Activated CD4-positive, alpha-beta memory T cell treated with anti-CD3 and anti-CD28 coated beads for 36 hours (primary cell): ENCODE measurements at regions of chr3 and their contacts with region 1.

Region 1: DNA sequence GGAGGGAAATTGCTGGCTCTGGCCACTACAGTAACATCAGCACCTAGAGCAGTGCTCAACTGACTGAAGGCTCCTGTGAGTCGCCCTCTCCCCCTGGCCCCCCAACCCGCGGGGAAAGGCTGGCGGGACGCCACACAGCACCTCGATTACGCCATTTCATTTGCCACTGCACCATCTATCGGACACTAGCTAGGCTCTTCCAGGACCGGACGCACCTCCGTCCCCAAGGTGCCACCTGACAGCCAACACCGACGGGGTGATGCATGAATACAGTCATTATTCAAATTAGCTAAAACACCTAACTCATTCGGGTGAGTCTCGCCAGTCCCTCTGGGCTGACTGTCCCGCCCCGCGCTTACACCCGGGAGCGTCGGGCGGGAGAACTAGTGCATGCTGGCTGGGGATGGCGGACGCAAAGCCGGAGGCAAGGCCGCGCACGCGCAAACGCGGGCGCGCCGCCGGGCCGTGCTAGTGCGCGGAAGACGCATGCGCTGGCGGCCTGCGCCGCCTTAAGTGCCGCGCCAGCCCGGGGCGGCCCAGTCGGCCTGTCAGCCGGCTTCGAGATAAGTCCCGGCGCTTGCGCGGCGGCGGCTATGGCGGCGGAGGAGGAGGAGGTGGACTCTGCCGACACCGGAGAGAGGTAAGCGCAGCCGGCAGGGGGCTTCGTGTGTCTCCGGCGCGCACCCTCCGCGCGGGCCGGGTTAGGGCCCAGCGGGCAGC is at the start of gene ABHD5:
- DNase-seq: peak; percentile 92
- H3K4me3 Mint-ChIP-seq: peak within 1 kb of the TSS; percentile 84
- H3K27ac Mint-ChIP-seq: peak within 1 kb of the TSS; percentile 85
- H3K4me1 Mint-ChIP-seq: peaks cover 37% of the 10 kb centered on the region
- H3K27me3 Mint-ChIP-seq: no peaks in the 10 kb centered on the region
- total RNA-seq, gene ABHD5: 10.0 to 11.4 TPM

Region 2: GRCh38 chr3:43523454-43524053 is 167.0 kb before region 1 on chr3:
- CTCF ChIA-PET with region 1: no interaction called
- POLR2A ChIA-PET with region 1: no interaction called
- intact Hi-C with region 1: loop called (anchors 5 kb)
- DNase-seq: peak; percentile 47
- H3K4me3 Mint-ChIP-seq: no peak overlapping the region
- H3K27ac Mint-ChIP-seq: no peak overlapping the region
- H3K4me1 Mint-ChIP-seq: no peaks in the 10 kb centered on the region
- H3K27me3 Mint-ChIP-seq: no peaks in the 10 kb centered on the region

Region 3: GRCh38 chr3:43621656-43622432 is 68.7 kb before region 1 on chr3 and contains the start of gene ANO10:
- CTCF ChIA-PET with region 1: interaction called, 3 read pairs
- POLR2A ChIA-PET with region 1: interaction called, 3 read pairs
- intact Hi-C with region 1: loop called (anchors 1 kb)
- DNase-seq: peak; percentile 97
- H3K4me3 Mint-ChIP-seq: peak within 1 kb of the TSS; percentile 82
- H3K27ac Mint-ChIP-seq: peak within 1 kb of the TSS; percentile 70
- H3K4me1 Mint-ChIP-seq: peaks cover 10% of the 10 kb centered on the region
- H3K27me3 Mint-ChIP-seq: no peaks in the 10 kb centered on the region
- total RNA-seq, gene ANO10: 8.4 to 8.5 TPM